Endothelial cell of umbilical vein (primary cell): ENCODE measurements at regions of chr9 and their contacts with region 1.

Region 1: GRCh38 chr9:98357921-98358535 is 102.6 kb upstream of the TBC1D2 start:
- DNase-seq: peak; percentile 73
- H3K4me3 ChIP-seq: no peak overlapping the region
- H3K27ac ChIP-seq: peak overlapping the region; percentile 92
- H3K4me1 ChIP-seq: peaks cover 30% of the 10 kb centered on the region
- H3K27me3 ChIP-seq: no peaks in the 10 kb centered on the region
- CTCF ChIP-seq: no peak
- POLR2A ChIP-seq: no peak

Region 2: DNA sequence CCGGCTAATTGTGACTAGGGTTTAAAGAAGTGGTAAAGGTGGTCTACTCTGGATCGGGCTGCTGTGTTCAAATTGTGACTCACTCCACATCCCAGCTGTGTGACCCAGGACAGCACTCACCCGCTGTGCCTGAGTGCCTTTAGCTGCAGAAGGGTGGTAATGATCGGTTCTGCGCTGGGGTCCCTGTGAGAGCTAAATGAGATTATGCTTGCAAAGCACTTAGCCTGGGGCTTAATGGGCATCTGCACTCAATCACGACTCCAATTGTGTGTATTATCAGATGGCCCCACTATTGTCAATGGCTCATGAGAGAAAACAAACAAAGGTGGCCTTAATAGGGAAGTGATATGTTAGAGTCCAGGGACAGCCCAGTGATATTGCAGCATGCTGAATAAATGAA is 77.5 kb before region 1 on chr9:
- CTCF ChIA-PET with region 1: no interaction called
- POLR2A ChIA-PET with region 1: no interaction called
- dilution Hi-C with region 1: no loop called
- intact Hi-C with region 1: no loop called
- DNase-seq: no peak
- H3K4me3 ChIP-seq: no peak overlapping the region
- H3K27ac ChIP-seq: no peak overlapping the region
- H3K4me1 ChIP-seq: no peaks in the 10 kb centered on the region
- H3K27me3 ChIP-seq: peaks cover 15 to 19% of the 10 kb centered on the region in 2 experiments
- CTCF ChIP-seq: no peak
- POLR2A ChIP-seq: no peak

Region 3: DNA sequence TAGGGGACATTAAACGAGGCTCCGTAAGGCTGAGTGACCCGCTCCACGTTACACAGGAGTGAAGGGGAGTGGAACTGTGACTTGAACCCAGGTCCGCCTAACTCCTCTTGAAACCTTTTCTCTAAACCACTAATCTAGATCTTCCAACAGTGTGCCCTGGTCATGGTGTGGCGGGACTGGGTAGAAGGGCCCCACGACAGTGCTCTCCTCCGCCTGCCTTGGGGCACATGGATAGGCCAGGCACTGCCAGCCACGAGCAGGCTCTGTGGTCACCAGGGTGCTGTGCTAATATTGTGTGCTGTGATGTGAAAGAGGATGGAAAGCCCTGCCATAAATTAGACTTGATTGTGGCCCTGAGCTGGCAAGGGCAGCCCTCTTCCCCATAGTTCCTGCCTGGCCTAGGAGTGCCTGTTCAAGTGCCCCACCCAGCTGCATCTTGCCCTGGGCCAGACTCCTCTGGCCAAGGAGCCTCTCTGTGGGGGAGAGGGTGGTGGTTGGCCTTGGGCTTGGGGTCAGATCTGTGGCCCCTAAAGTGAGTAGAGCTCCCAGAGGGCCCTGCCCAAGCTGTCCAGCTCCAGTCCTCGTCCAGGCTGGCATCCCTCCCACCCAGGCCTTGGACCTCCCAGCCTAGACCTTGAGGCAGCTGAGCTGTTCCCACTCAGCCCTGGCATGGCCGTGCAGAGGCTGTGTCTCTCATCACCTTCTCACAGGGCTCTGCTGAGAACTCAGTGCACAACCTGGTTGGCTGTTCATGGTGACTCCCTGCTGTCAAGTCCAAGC is 34.8 kb before region 1 on chr9:
- CTCF ChIA-PET with region 1: no interaction called
- POLR2A ChIA-PET with region 1: no interaction called
- dilution Hi-C with region 1: no loop called
- intact Hi-C with region 1: loop called (anchors 2 kb)
- DNase-seq: no peak
- H3K4me3 ChIP-seq: no peak overlapping the region
- H3K27ac ChIP-seq: peak overlapping the region; percentile 84
- H3K4me1 ChIP-seq: peaks cover 22% of the 10 kb centered on the region
- H3K27me3 ChIP-seq: no peaks in the 10 kb centered on the region
- CTCF ChIP-seq: no peak
- POLR2A ChIP-seq: no peak

Region 4: DNA sequence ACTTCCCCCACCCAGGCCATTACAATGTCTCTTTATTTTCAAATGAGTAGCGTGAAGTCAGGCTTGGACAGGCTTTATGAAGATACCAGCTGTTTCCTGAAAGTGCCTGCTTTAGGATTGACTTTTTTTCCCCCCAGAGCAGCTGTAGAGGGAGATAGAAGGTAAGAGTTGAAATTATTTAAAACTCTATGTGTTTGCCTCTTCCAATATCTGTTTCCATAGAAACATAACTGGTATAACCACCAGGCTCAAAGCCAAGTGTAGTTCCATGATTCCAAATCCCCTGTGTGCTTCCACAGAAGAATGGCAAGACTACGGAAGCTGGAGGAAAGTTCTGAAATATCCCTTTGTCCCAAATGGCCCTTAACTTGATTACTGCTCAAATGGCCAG is 15.2 kb before region 1 on chr9:
- CTCF ChIA-PET with region 1: interaction called, 10 read pairs
- POLR2A ChIA-PET with region 1: no interaction called
- dilution Hi-C with region 1: no loop called
- intact Hi-C with region 1: no loop called
- DNase-seq: peak; percentile 29
- H3K4me3 ChIP-seq: no peak overlapping the region
- H3K27ac ChIP-seq: no peak overlapping the region
- H3K4me1 ChIP-seq: peaks cover 21% of the 10 kb centered on the region
- H3K27me3 ChIP-seq: no peaks in the 10 kb centered on the region
- CTCF ChIP-seq: no peak
- POLR2A ChIP-seq: no peak

Region 5: DNA sequence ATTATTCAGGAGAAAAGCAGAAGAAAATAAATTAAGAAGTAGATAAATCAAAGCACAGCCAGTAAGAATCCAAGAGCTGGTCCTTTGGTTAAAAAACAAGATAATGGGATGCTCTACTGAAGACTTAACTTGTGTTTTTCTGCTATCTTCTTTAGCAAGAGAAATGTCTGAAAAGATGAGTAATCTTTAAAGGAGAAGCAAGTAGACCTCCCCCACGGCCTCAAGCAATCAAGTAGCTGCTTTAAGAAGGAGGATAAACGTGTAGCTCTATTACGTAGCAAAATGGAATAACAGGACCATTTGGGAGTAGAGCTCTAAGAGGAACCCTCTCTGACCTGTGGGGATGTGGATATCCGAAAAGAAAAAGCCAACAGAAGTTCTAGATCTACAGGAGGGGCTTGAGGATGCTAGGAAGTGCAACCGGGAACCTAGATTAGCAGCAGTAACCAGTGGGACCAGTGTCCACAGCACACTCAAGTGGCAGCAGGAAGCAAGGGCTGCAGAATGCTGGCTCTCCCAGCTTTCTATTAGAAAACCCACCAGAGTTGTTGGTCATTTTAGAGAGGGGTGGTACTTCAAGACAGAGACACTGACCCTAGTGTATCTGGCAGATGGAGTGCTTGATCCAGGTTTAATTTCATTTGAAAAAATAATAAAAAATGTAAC is 165.3 kb after region 1 on chr9:
- CTCF ChIA-PET with region 1: interaction called, 3 read pairs
- POLR2A ChIA-PET with region 1: no interaction called
- dilution Hi-C with region 1: no loop called
- intact Hi-C with region 1: loop called (anchors 2 kb)
- DNase-seq: peak; percentile 30
- H3K4me3 ChIP-seq: no peak overlapping the region
- H3K27ac ChIP-seq: peak overlapping the region; percentile 60
- H3K4me1 ChIP-seq: peaks cover 34% of the 10 kb centered on the region
- H3K27me3 ChIP-seq: no peaks in the 10 kb centered on the region
- CTCF ChIP-seq: peak; percentile 17 to 45
- POLR2A ChIP-seq: no peak